ENCODE measurements at regions of chr12 and their contacts with region 1.

Region 1: DNA sequence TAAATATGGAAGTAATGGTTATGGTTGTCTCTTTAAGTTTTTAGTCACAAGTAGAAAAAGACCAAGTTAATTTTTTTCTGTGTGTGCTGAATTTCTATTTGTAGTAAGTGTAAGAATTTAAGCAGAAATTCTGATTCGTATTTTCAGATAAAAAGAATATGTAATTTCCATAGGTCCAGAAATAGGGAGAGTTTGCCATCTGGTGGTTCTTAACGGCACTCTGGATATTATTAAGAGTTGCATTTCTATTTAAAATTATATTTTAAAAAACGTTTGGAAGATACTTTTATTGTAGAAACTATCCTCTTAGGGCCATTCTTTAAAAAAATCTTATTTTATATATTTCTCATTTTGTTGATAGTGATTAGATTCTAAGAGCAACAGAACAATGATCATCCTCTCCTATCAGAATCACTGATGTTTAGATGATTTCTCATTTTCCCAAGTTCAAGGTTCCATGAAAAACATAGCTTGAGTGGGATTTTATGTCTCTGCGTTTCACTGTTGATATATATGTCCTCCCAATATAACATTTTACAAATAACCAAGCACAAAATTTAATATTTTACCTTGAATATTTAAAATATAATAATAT is 88.3 kb downstream of the LRRK2 start:
- DNase-seq: peak; percentile 38
- ATAC-seq: no peak
- H3K4me3 ChIP-seq: no peak overlapping the region
- H3K27ac ChIP-seq: no peak overlapping the region
- H3K4me1 ChIP-seq: no peaks in the 10 kb centered on the region
- H3K27me3 ChIP-seq: peaks cover 47% of the 10 kb centered on the region
- CTCF ChIP-seq: peak; percentile 60

Region 2: GRCh38 chr12:40152783-40153383 is 160.2 kb before region 1 on chr12:
- CTCF ChIA-PET with region 1: no interaction called
- POLR2A ChIA-PET with region 1: no interaction called
- intact Hi-C with region 1: loop called (anchors 1 kb)
- DNase-seq: peak; percentile 68
- ATAC-seq: peak; percentile 49
- H3K4me3 ChIP-seq: no peak overlapping the region
- H3K27ac ChIP-seq: no peak overlapping the region
- H3K4me1 ChIP-seq: peaks cover 4% of the 10 kb centered on the region; the same call in 1 of the 2 replicates
- H3K27me3 ChIP-seq: peaks cover 20% of the 10 kb centered on the region; the same call in 1 of the 2 replicates
- CTCF ChIP-seq: peak; percentile 85

Region 3: GRCh38 chr12:40515041-40515816 is 202.2 kb after region 1 on chr12:
- CTCF ChIA-PET with region 1: no interaction called
- POLR2A ChIA-PET with region 1: no interaction called
- intact Hi-C with region 1: no loop called
- DNase-seq: no peak
- ATAC-seq: no peak
- H3K4me3 ChIP-seq: no peak overlapping the region
- H3K27ac ChIP-seq: no peak overlapping the region
- H3K4me1 ChIP-seq: no peaks in the 10 kb centered on the region
- H3K27me3 ChIP-seq: 0 out of 2 replicates have a peak, but pooled peaks cover 7% of the 10 kb centered on the region
- CTCF ChIP-seq: no peak